GM10248 (cell line): ENCODE measurements at regions of chr11 and their contacts with region 1.

Region 1: GRCh38 chr11:76919887-76920746 is 59.4 kb downstream of the ACER3 start:
- DNase-seq: peak; percentile 64
- CTCF ChIP-seq: peak; percentile 79

Region 2: DNA sequence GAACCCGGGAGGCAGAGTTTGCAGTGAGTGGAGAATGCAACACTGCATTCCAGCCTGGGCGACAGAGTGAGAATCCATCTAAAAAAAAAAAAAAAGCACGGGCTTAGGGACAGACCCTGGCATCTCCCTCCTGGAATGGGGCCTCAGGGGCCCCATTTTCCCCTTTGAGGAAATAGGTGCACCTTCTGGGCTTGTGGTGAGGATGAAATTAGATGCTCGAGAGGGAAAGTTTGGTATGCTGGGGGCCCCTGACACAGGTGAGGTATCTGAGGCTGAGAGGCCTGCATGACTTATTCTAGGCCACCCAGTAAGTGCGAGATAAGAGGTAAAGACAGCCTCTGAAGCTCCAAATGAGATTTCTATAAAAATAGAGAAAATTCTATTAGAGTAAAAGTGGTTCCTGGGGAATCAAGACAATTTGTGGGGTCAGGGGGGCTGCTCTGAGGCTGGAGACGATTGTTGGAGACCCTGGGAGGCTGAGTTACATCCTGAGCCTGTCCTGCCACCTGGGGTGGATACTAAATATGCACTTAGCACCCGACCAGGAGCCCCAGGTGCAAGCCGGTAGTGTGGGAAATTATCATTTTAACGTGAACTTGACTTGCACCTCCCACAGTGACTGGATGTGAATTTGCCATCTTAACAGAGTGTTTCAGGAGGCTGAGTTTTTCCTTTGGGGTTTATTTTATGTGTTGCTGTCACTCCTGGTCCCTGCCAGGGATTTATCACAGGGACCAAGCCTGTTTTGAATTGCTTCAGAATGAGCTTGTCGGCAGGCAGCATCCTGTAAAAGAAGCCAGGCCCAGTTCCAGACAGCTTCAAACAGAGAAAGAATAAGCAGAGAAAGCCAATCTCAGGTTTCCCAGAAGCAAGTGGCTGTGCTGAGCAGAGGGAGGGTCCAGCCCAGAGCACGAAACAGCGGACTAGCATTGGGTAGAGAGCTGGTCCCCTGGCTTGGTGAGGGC is 185.4 kb before region 1 on chr11:
- CTCF ChIA-PET with region 1: interaction called, 13 read pairs
- POLR2A ChIA-PET with region 1: no interaction called
- DNase-seq: no peak
- CTCF ChIP-seq: no peak

Region 3: DNA sequence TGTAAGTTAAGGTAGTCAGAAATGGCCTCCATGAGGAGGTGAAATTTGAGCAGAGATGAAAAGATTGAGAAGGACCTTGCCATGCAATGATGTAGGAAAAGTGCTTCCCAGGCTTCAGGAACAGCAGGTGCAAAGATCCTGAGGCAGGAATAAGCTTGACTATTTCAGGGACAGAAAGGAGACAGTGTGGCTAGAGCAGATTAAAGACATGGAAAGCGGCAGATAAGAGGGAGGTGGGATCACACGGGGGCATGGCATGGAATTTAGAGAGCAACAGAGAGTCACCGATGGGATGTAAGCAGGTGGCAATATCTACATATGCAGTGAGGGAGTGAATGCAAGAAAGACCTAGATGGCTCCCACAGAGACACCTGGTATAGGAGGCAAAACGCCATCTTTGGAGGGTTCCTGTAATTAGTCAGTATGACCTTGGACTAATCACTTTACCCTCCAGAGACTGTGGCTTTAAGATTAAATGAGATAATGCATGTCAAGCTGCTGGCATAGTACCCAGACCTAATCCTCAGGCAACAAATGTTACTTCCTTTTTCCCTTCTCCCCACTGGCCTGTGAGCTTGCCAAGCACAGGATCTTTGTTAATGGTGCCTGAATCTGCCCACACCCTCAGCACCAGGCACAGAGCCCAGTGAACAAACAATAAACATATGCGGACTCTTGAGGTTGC is 84.0 kb before region 1 on chr11:
- CTCF ChIA-PET with region 1: interaction called, 17 read pairs
- POLR2A ChIA-PET with region 1: no interaction called
- DNase-seq: no peak
- CTCF ChIP-seq: no peak

Region 4: DNA sequence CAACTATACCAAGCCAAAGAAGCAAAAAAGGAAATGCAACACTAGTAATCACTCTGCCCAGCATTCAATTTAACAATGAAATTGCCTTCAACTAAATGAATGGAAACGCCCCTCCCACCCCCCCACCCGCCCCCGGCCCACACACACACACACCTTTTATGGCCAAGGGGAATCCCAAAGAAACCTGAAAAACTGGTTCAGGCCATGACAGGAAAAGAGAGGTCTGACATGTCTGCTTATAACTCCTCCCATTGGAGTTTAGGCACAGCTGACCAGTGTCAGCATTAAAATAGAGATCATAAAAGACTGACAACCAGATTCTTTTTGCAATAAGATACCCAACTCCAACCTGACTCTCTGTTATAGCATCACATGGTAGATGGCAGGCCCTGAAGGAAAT is 16.8 kb before region 1 on chr11:
- CTCF ChIA-PET with region 1: interaction called, 87 read pairs
- POLR2A ChIA-PET with region 1: no interaction called
- DNase-seq: no peak
- CTCF ChIP-seq: no peak

Region 5: DNA sequence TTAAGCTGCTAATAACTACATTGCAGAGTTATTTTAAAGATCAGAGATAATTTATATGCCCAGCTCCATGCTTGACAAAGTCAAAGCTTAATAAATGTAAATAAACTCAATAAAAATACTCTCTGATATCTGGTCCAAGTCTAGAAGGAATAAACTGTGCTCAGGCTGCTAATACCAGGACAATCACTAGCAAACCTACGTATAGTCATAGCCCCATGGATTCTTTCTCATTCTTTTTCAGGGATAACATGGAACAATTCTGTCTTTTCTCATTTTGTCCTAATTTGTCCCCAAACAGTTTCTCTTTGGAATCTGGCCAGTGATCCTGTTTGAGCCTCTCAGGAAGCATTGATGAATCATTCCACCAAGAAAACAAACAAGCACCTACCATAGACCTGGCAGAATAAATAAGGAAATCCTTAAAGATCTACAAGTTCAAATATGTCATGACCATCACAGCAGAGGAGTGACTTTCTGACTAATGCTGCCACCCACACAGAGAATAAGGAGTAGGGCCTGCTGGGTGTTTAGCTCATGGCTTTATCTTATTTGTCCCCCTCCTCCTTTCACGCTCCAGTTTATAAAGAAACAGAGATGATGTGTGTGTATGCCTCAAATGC is 100.0 kb after region 1 on chr11:
- CTCF ChIA-PET with region 1: interaction called, 19 read pairs
- POLR2A ChIA-PET with region 1: no interaction called
- DNase-seq: no peak
- CTCF ChIP-seq: no peak

Region 6: DNA sequence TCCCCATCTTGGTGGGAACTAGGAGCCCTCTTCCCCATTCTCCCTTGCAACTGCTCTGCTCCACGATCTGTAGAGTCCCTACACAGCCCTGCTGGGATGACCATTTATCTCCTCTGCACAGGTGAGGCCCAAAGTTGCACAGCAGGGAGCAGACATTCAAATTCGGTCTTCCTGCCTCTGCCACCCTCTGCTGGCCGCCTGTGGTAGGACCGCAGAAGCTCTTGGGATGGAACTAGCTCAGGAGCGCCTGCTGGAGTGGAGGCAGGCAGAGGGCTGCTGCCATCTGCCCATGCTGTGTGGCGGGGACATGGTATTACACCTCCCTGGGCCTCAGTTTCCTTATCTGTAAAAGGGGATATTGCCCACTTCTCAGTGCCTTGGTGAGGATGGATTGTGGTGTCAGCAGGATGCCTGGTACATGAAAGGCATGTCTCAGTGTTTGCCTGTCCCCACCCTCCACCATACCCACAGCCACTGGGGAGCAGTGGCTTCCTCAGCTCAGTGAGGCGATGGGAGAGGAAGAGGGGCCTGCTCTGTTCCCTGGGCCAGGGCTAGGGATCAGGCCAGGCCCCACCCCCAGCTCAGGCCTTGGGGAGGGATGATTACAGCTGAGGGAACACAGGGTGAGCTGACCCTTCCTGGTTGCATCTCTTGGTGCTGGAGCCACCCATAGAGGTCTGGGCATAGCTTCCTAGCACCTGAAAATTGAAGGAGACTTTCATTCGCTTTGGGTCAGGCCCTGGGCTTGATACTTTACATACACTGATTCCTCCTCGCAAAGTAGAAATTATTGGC is 171.2 kb after region 1 on chr11:
- CTCF ChIA-PET with region 1: interaction called, 73 read pairs
- POLR2A ChIA-PET with region 1: no interaction called
- DNase-seq: peak; percentile 91
- CTCF ChIP-seq: peak; percentile 98